Sigmoid colon (tissue), 7 donors: ENCODE measurements at regions of chr17 and their contacts with region 1.

Region 1: GRCh38 chr17:7589204-7589868 is 558 bp downstream of the SOX15 start:
- DNase-seq: peak; percentile 94
- H3K4me3 ChIP-seq: peak overlapping the region; percentile 61 to 73 (median 69)
- H3K27ac ChIP-seq: peak overlapping the region; percentile 82 to 90 (median 86)
- H3K4me1 ChIP-seq: peaks cover 0 to 46% (median 39%) of the 10 kb centered on the region in 4 donors
- H3K27me3 ChIP-seq: no peaks in the 10 kb centered on the region
- CTCF ChIP-seq: peak; percentile 72 to 89 (median 88)
- EP300 ChIP-seq: no peak
- POLR2A ChIP-seq: peak in 1 of 2 donors; percentile 13

Region 2: GRCh38 chr17:7363311-7363710 is 226.0 kb before region 1 on chr17:
- intact Hi-C with region 1: no loop called
- DNase-seq: no peak
- H3K4me3 ChIP-seq: no peak overlapping the region
- H3K27ac ChIP-seq: no peak overlapping the region
- H3K4me1 ChIP-seq: no peaks in the 10 kb centered on the region
- H3K27me3 ChIP-seq: no peaks in the 10 kb centered on the region
- CTCF ChIP-seq: no peak
- EP300 ChIP-seq: no peak
- POLR2A ChIP-seq: no peak

Region 3: DNA sequence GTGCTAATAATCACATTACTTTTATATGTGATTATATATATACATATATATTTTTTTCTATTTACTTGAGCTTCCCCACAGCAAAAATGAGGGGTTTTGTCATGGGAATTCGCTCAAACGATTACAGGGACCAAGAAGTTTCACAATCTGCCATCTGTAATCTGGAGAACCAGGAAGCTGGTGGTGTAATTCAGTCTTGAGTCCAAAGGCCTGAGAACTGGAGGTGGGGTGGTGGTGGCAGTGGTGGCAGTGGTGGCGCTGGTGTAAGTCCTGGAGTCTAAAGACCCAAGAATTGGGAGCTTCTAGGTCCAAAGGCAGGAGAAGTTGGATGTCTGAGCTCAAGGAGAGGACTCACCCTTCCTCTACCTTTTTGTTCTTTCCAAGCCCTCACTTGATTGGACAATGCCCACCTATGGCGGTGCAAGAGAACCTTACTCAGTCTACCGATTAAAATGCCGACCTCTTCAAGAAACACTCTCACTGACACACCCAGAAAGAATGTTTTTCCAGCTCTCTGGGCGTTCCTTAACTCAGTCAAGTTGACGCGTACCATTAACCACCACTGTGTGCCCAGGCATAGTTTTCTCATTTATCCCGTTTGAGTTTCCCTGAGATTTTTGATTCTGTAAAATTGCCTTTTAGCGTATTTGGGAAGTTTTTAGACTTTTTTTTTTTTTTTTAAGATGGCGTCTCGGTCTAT is 73.3 kb before region 1 on chr17:
- intact Hi-C with region 1: loop called (anchors 2 kb)
- DNase-seq: no peak
- H3K4me3 ChIP-seq: no peak overlapping the region
- H3K27ac ChIP-seq: no peak overlapping the region
- H3K4me1 ChIP-seq: no peaks in the 10 kb centered on the region
- H3K27me3 ChIP-seq: no peaks in the 10 kb centered on the region
- CTCF ChIP-seq: no peak
- EP300 ChIP-seq: no peak
- POLR2A ChIP-seq: no peak

Region 4: DNA sequence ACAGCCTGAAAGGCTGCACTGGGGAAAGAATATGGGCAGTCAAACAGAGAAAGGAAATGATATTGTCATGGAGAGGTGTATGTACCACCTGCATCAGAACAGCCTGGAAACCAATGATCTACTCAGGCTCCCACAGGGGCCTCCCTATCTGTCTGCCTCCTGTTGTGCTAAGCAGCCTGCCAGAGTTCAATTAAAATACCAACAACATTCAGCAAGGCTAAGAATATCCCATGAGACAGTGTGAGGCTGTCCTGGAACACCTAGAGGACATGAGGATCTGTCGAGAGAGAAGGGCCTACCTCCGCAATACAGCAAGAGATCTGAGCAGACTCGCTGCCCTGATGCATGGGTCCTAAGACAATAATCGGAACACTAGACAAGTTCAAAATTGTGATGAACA is 16.9 kb after region 1 on chr17:
- intact Hi-C with region 1: no loop called
- DNase-seq: no peak
- H3K4me3 ChIP-seq: no peak overlapping the region
- H3K27ac ChIP-seq: no peak overlapping the region
- H3K4me1 ChIP-seq: peaks cover 0 to 17% (median 10%) of the 10 kb centered on the region in 4 donors
- H3K27me3 ChIP-seq: no peaks in the 10 kb centered on the region
- CTCF ChIP-seq: no peak
- EP300 ChIP-seq: no peak
- POLR2A ChIP-seq: no peak

Region 5: GRCh38 chr17:7703584-7704479 is 114.5 kb after region 1 on chr17:
- intact Hi-C with region 1: no loop called
- DNase-seq: no peak
- H3K4me3 ChIP-seq: no peak overlapping the region
- H3K27ac ChIP-seq: no peak overlapping the region
- H3K4me1 ChIP-seq: peaks cover 0 to 24% (median 17%) of the 10 kb centered on the region in 4 donors
- H3K27me3 ChIP-seq: peaks cover 27 to 77% (median 58%) of the 10 kb centered on the region in 3 donors
- CTCF ChIP-seq: no peak
- EP300 ChIP-seq: no peak
- POLR2A ChIP-seq: no peak